ENCODE measurements at regions of chr5 and their contacts with region 1.

Region 1: DNA sequence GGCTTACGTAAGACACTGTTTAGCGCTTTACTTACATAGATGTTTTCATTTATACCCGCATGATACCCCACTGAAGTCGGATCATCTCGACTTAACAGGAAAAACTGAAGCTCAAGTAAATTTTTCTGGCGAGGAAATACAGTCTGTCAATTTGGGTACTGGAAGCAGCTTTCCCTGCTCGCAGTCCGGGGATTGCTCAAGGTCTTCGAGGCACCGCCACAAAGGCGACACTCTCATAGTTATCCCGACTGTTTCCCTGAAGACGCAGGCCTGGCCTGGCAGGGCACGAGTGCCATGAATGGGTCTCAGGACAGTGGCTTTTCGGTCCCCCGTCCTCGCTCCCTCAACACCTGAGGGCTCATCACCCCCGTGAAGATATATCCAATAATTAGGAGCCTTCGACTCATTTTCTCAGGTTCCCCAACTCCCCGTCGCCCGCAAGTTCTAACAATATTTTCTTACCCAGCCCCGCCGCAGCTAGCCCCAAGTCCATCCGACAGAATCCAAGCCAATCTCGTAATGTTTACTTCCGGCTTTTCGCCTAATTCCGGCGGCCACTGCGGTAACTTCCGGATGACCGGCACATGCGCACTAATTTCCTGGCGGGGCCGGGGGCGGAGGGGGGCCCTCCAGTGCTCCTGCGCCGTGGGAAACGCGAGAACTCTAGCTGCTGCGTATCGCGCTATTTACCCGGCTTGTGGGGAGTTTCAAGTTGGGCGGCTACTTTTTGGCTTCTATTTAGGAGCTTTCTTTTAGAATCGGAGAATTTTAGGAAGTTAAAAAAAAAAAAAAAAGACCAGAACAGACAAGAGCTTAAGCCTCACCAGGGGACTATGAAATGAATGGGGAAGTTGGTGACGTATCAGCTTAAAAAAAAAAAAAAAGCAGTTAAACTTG is at the start of gene SLU7:
- DNase-seq: peak; percentile 94 to 96
- ATAC-seq: peak; percentile 78 to 87 (median 81)
- H3K4me3 ChIP-seq: peak within 1 kb of the TSS; percentile 99
- H3K4me3 Mint-ChIP-seq: peak within 1 kb of the TSS; percentile 96
- H3K27ac ChIP-seq: peak within 1 kb of the TSS; percentile 97
- H3K27ac Mint-ChIP-seq: peak within 1 kb of the TSS; percentile 99
- H3K4me1 ChIP-seq: peaks cover 19% of the 10 kb centered on the region
- H3K4me1 Mint-ChIP-seq: peaks cover 53 to 61% of the 10 kb centered on the region in 2 donors
- H3K27me3 ChIP-seq: no peaks in the 10 kb centered on the region
- H3K27me3 Mint-ChIP-seq: no peaks in the 10 kb centered on the region
- CTCF ChIP-seq: no peak
- total RNA-seq, gene SLU7: 114 to 143 (median 118) TPM

Region 2: GRCh38 chr5:159209438-159210305 is 1209.1 kb before region 1 on chr5 and contains the start of gene RNF145:
- intact Hi-C with region 1: loop called (anchors 2 kb)
- DNase-seq: peak; percentile 88 to 98
- ATAC-seq: peak; percentile 76 to 91 (median 78)
- H3K4me3 ChIP-seq: peak within 1 kb of the TSS; percentile 81
- H3K4me3 Mint-ChIP-seq: peak within 1 kb of the TSS; percentile 99
- H3K27ac ChIP-seq: peak within 1 kb of the TSS; percentile 81
- H3K27ac Mint-ChIP-seq: peak within 1 kb of the TSS; percentile 95 to 98
- H3K4me1 ChIP-seq: peaks cover 9% of the 10 kb centered on the region
- H3K4me1 Mint-ChIP-seq: peaks cover 42 to 46% of the 10 kb centered on the region in 2 donors
- H3K27me3 ChIP-seq: no peaks in the 10 kb centered on the region
- H3K27me3 Mint-ChIP-seq: peaks cover 6 to 25% of the 10 kb centered on the region in 2 donors
- CTCF ChIP-seq: no peak
- total RNA-seq, gene RNF145: 29.8 to 40.4 (median 38.4) TPM

Region 3: GRCh38 chr5:160008877-160009590 is 409.8 kb before region 1 on chr5 and contains the start of gene TTC1:
- intact Hi-C with region 1: loop called (anchors 1 kb)
- DNase-seq: peak; percentile 86 to 100
- ATAC-seq: peak; percentile 97 to 99 (median 98)
- H3K4me3 ChIP-seq: peak within 1 kb of the TSS; percentile 63
- H3K4me3 Mint-ChIP-seq: peak within 1 kb of the TSS; percentile 96
- H3K27ac ChIP-seq: peak within 1 kb of the TSS; percentile 74
- H3K27ac Mint-ChIP-seq: peak within 1 kb of the TSS; percentile 92 to 94
- H3K4me1 ChIP-seq: peaks cover 18% of the 10 kb centered on the region
- H3K4me1 Mint-ChIP-seq: peaks cover 28 to 30% of the 10 kb centered on the region in 2 donors
- H3K27me3 ChIP-seq: no peaks in the 10 kb centered on the region
- H3K27me3 Mint-ChIP-seq: peaks cover 3 to 5% of the 10 kb centered on the region in 2 donors
- CTCF ChIP-seq: no peak
- total RNA-seq, gene TTC1: 28.1 to 34.9 (median 33.6) TPM

Region 4: GRCh38 chr5:160119142-160119904 is 299.5 kb before region 1 on chr5 and contains the start of gene PWWP2A:
- intact Hi-C with region 1: loop called (anchors 1 kb)
- DNase-seq: peak; percentile 89 to 100
- ATAC-seq: peak; percentile 90 to 98 (median 91)
- H3K4me3 ChIP-seq: peak within 1 kb of the TSS; percentile 77
- H3K4me3 Mint-ChIP-seq: peak within 1 kb of the TSS; percentile 94
- H3K27ac ChIP-seq: peak within 1 kb of the TSS; percentile 78
- H3K27ac Mint-ChIP-seq: peak within 1 kb of the TSS; percentile 90 to 93
- H3K4me1 ChIP-seq: peaks cover 12% of the 10 kb centered on the region
- H3K4me1 Mint-ChIP-seq: peaks cover 15 to 24% of the 10 kb centered on the region in 2 donors
- H3K27me3 ChIP-seq: no peaks in the 10 kb centered on the region
- H3K27me3 Mint-ChIP-seq: peaks cover 0 to 10% of the 10 kb centered on the region in 2 donors
- CTCF ChIP-seq: no peak
- total RNA-seq, gene PWWP2A: 24.9 to 37.6 (median 30.2) TPM

Region 5: DNA sequence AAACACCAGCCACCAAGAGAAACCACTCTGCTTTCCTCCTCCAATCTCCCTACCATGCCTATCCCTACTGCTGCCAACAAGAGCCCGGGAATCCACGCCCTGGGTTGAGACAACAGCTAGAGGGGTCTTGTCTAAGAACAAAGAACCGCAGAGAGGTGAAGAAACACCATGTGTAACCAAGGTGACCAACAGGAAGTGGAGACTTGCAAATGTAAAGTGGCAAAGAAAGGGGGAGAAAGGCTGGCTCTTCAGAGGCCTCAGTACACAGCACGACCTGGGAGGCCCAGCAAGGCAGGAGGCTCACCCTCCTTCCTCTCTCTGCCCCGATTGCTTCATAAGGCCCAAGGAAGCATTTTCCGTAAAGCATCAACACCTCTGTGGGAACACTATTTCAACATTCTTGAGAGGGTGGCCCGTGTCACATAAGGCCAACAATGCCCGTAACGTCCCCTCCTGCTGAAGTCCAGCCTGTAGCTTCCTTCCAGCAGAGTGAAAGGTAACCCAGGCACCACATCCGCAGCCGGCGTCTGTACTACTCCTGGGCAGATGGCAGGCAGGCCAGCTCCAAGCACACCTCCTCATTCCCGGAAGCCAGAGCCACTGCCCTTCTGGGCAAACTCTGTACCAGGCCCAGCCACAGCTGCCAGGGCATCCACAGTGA is 124.8 kb before region 1 on chr5:
- intact Hi-C with region 1: loop called (anchors 5 kb)
- DNase-seq: peak; percentile 32 to 54
- ATAC-seq: peak; percentile 52 to 74 (median 67)
- H3K4me3 ChIP-seq: no peak overlapping the region
- H3K4me3 Mint-ChIP-seq: peak overlapping the region; percentile 88
- H3K27ac ChIP-seq: peak overlapping the region; percentile 91
- H3K27ac Mint-ChIP-seq: peak overlapping the region; percentile 89 to 98
- H3K4me1 ChIP-seq: peaks cover 94% of the 10 kb centered on the region
- H3K4me1 Mint-ChIP-seq: peaks cover 85 to 91% of the 10 kb centered on the region in 2 donors
- H3K27me3 ChIP-seq: no peaks in the 10 kb centered on the region
- H3K27me3 Mint-ChIP-seq: no peaks in the 10 kb centered on the region
- CTCF ChIP-seq: no peak

Region 6: GRCh38 chr5:160467555-160468362 is 49.0 kb after region 1 on chr5:
- intact Hi-C with region 1: loop called (anchors 1 kb)
- DNase-seq: peak; percentile 79 to 89
- ATAC-seq: peak; percentile 84 to 94 (median 93)
- H3K4me3 ChIP-seq: peak overlapping the region; percentile 37
- H3K4me3 Mint-ChIP-seq: peak overlapping the region; percentile 93
- H3K27ac ChIP-seq: peak overlapping the region; percentile 60
- H3K27ac Mint-ChIP-seq: peak overlapping the region; percentile 89 to 92
- H3K4me1 ChIP-seq: peaks cover 41% of the 10 kb centered on the region
- H3K4me1 Mint-ChIP-seq: peaks cover 59 to 63% of the 10 kb centered on the region in 2 donors
- H3K27me3 ChIP-seq: no peaks in the 10 kb centered on the region
- H3K27me3 Mint-ChIP-seq: no peaks in the 10 kb centered on the region
- CTCF ChIP-seq: no peak